Left ventricle myocardium inferior (tissue), 1 donor: ENCODE measurements at regions of chr4 and their contacts with region 1.

Region 1: GRCh38 chr4:77203380-77204197 is 46.6 kb downstream of the CCNG2 start:
- DNase-seq: peak; percentile 23
- H3K4me3 ChIP-seq: no peak overlapping the region
- H3K27ac ChIP-seq: no peak overlapping the region
- H3K4me1 ChIP-seq: no peaks in the 10 kb centered on the region
- H3K27me3 ChIP-seq: peaks cover 16% of the 10 kb centered on the region
- CTCF ChIP-seq: peak; percentile 82

Region 2: GRCh38 chr4:77052352-77052751 is 151.2 kb before region 1 on chr4:
- intact Hi-C with region 1: loop called (anchors 5 kb)
- DNase-seq: no peak
- H3K4me3 ChIP-seq: no peak overlapping the region
- H3K27ac ChIP-seq: no peak overlapping the region
- H3K4me1 ChIP-seq: peaks cover 15% of the 10 kb centered on the region
- H3K27me3 ChIP-seq: no peaks in the 10 kb centered on the region
- CTCF ChIP-seq: peak; percentile 50

Region 3: GRCh38 chr4:77095101-77095821 is 108.3 kb before region 1 on chr4:
- intact Hi-C with region 1: loop called (anchors 5 kb)
- DNase-seq: peak; percentile 78
- H3K4me3 ChIP-seq: no peak overlapping the region
- H3K27ac ChIP-seq: no peak overlapping the region
- H3K4me1 ChIP-seq: peaks cover 23% of the 10 kb centered on the region
- H3K27me3 ChIP-seq: no peaks in the 10 kb centered on the region
- CTCF ChIP-seq: peak; percentile 92

Region 4: GRCh38 chr4:77600521-77601451 is 397.2 kb after region 1 on chr4:
- intact Hi-C with region 1: no loop called
- DNase-seq: no peak
- H3K4me3 ChIP-seq: no peak overlapping the region
- H3K27ac ChIP-seq: no peak overlapping the region
- H3K4me1 ChIP-seq: no peaks in the 10 kb centered on the region
- H3K27me3 ChIP-seq: peaks cover 38% of the 10 kb centered on the region
- CTCF ChIP-seq: peak; percentile 84